ENCODE measurements at regions of chr13 and their contacts with region 1.

Region 1: GRCh38 chr13:110915057-110915873 is at the start of gene ANKRD10:
- DNase-seq: peak; percentile 98
- H3K4me3 Mint-ChIP-seq: peak within 1 kb of the TSS; percentile 92
- H3K27ac Mint-ChIP-seq: peak within 1 kb of the TSS; percentile 98
- H3K4me1 Mint-ChIP-seq: peaks cover 36% of the 10 kb centered on the region
- H3K27me3 Mint-ChIP-seq: no peaks in the 10 kb centered on the region
- total RNA-seq, gene ANKRD10: 145 and 147 TPM in 2 replicates

Region 2: GRCh38 chr13:109998726-109999533 is 916.3 kb before region 1 on chr13:
- intact Hi-C with region 1: no loop called
- DNase-seq: no peak
- H3K4me3 Mint-ChIP-seq: no peak overlapping the region
- H3K27ac Mint-ChIP-seq: no peak overlapping the region
- H3K4me1 Mint-ChIP-seq: no peaks in the 10 kb centered on the region
- H3K27me3 Mint-ChIP-seq: peaks cover 2% of the 10 kb centered on the region

Region 3: DNA sequence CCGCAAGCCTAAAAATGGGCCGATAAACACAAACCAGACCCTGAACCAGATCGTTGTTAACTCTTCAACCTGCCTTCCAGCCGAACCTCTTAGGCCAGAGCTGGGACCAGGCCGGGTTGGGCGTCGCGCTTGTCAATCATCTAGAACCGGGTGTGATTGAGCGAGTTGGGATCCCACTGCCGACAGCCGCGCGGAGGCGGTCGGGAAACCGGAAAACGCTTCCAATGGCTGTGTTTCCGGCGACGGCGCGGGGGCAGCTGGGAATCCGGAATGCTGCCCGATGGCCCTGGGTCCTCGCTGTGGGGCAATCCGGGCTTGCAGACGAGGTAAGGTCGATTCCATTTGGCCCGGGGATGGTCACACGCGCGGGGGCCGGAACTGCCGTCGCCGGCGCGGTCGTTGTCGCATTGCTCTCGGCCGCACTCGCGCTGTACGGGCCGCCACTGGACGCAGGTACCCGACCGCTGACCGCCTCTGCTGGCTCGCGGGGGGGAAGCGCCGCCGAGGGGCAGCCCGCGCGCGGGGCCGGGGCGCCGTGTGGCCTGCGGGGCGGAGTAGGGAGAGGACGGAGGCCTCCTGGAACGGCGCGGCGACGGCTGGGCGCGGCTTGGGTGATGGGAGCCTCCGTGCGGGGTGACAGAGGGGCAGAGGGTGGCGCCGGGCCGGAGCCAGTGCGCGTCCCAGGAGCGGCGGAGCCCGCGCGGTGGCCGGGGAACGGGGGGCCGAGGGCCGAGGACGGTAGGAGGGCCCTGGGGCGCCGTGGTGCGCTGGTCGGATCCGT is 299.8 kb before region 1 on chr13 and contains the start of gene NAXD:
- intact Hi-C with region 1: loop called (anchors 5 kb)
- DNase-seq: peak; percentile 94
- H3K4me3 Mint-ChIP-seq: peak within 1 kb of the TSS; percentile 95
- H3K27ac Mint-ChIP-seq: peak within 1 kb of the TSS; percentile 95
- H3K4me1 Mint-ChIP-seq: peaks cover 26% of the 10 kb centered on the region
- H3K27me3 Mint-ChIP-seq: peaks cover 2% of the 10 kb centered on the region
- total RNA-seq, gene NAXD: 20.6 and 23.7 TPM in 2 replicates

Region 4: GRCh38 chr13:110944121-110944967 is 29.1 kb after region 1 on chr13:
- intact Hi-C with region 1: loop called (anchors 1 kb)
- DNase-seq: peak; percentile 81
- H3K4me3 Mint-ChIP-seq: no peak overlapping the region
- H3K27ac Mint-ChIP-seq: peak overlapping the region; percentile 20
- H3K4me1 Mint-ChIP-seq: peaks cover 33% of the 10 kb centered on the region
- H3K27me3 Mint-ChIP-seq: peaks cover 4% of the 10 kb centered on the region

Region 5: GRCh38 chr13:111049802-111050538 is 134.7 kb after region 1 on chr13:
- intact Hi-C with region 1: loop called (anchors 1 kb)
- DNase-seq: no peak
- H3K4me3 Mint-ChIP-seq: no peak overlapping the region
- H3K27ac Mint-ChIP-seq: no peak overlapping the region
- H3K4me1 Mint-ChIP-seq: peaks cover 9% of the 10 kb centered on the region
- H3K27me3 Mint-ChIP-seq: peaks cover 15% of the 10 kb centered on the region

Region 6: GRCh38 chr13:111184458-111185401 is 269.5 kb after region 1 on chr13:
- intact Hi-C with region 1: loop called (anchors 10 kb)
- DNase-seq: peak; percentile 81
- H3K4me3 Mint-ChIP-seq: peak overlapping the region; percentile 82
- H3K27ac Mint-ChIP-seq: peak overlapping the region; percentile 94
- H3K4me1 Mint-ChIP-seq: peaks cover 87% of the 10 kb centered on the region
- H3K27me3 Mint-ChIP-seq: no peaks in the 10 kb centered on the region

Region 7: GRCh38 chr13:112587212-112587763 is 1672.0 kb after region 1 on chr13:
- intact Hi-C with region 1: loop called (anchors 10 kb)
- DNase-seq: peak; percentile 90
- H3K4me3 Mint-ChIP-seq: peak overlapping the region; percentile 98
- H3K27ac Mint-ChIP-seq: peak overlapping the region; percentile 96
- H3K4me1 Mint-ChIP-seq: peaks cover 32% of the 10 kb centered on the region
- H3K27me3 Mint-ChIP-seq: no peaks in the 10 kb centered on the region